ENCODE measurements at regions of chr2 and their contacts with region 1.

Region 1: GRCh38 chr2:218295029-218295428 is 2.7 kb upstream of the TMBIM1 start:
- DNase-seq: peak; percentile 67
- H3K4me3 ChIP-seq: no peak overlapping the region
- H3K27ac ChIP-seq: peak overlapping the region; percentile 76
- H3K4me1 ChIP-seq: peaks cover 69% of the 10 kb centered on the region
- H3K27me3 ChIP-seq: no peaks in the 10 kb centered on the region
- CTCF ChIP-seq: no peak

Region 2: GRCh38 chr2:218180467-218181114 is 114.4 kb before region 1 on chr2:
- CTCF ChIA-PET with region 1: no interaction called
- dilution Hi-C with region 1: no loop called
- in situ Hi-C with region 1: no loop called
- intact Hi-C with region 1: no loop called
- DNase-seq: no peak
- H3K4me3 ChIP-seq: no peak overlapping the region
- H3K27ac ChIP-seq: no peak overlapping the region
- H3K4me1 ChIP-seq: no peaks in the 10 kb centered on the region
- H3K27me3 ChIP-seq: no peaks in the 10 kb centered on the region
- CTCF ChIP-seq: no peak

Region 3: GRCh38 chr2:218216674-218217359 is 78.2 kb before region 1 on chr2 and contains the start of gene ARPC2:
- CTCF ChIA-PET with region 1: no interaction called
- dilution Hi-C with region 1: no loop called
- in situ Hi-C with region 1: no loop called
- intact Hi-C with region 1: no loop called
- DNase-seq: peak; percentile 91
- H3K4me3 ChIP-seq: peak within 1 kb of the TSS; percentile 84 to 92 (median 91)
- H3K27ac ChIP-seq: peak within 1 kb of the TSS; percentile 84
- H3K4me1 ChIP-seq: peaks cover 29% of the 10 kb centered on the region
- H3K27me3 ChIP-seq: no peaks in the 10 kb centered on the region
- CTCF ChIP-seq: no peak
- total RNA-seq, gene ARPC2: 523 to 644 TPM

Region 4: DNA sequence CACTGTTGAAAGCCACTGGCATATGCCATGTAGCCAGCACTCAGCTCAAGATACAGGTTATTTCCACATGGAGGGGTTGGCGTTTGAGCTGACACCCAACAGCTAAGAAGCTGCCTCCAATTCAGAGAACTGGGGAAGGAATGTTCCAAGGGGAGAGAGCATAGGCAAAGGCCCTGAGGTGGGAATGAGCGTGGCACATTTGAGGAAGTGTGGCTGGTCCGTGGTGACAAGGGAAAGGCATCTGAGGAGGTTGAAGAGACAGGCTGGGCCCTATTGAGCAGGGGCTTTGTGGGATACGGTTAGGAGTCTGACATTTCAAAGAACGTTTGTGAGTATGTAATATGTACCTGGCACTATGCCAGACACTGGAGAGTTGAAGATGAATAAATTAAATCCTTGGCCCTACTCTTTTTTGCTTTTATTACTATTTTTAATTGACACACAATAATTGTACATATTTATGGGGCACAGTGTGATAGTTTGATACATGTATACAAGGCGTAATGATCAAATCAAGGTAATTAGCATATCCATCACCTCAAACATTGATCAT is 24.9 kb after region 1 on chr2:
- CTCF ChIA-PET with region 1: no interaction called
- dilution Hi-C with region 1: no loop called
- in situ Hi-C with region 1: no loop called
- intact Hi-C with region 1: no loop called
- DNase-seq: no peak
- H3K4me3 ChIP-seq: no peak overlapping the region
- H3K27ac ChIP-seq: no peak overlapping the region
- H3K4me1 ChIP-seq: peaks cover 15% of the 10 kb centered on the region
- H3K27me3 ChIP-seq: no peaks in the 10 kb centered on the region
- CTCF ChIP-seq: no peak

Region 5: GRCh38 chr2:218339806-218340205 is 44.8 kb after region 1 on chr2:
- CTCF ChIA-PET with region 1: interaction called, 3 read pairs
- dilution Hi-C with region 1: loop called (anchors 5 kb)
- in situ Hi-C with region 1: no loop called
- intact Hi-C with region 1: no loop called
- DNase-seq: no peak
- H3K4me3 ChIP-seq: no peak overlapping the region
- H3K27ac ChIP-seq: no peak overlapping the region
- H3K4me1 ChIP-seq: no peaks in the 10 kb centered on the region
- H3K27me3 ChIP-seq: no peaks in the 10 kb centered on the region
- CTCF ChIP-seq: no peak